ENCODE measurements at regions of chr5 and their contacts with region 1.

Region 1: GRCh38 chr5:143536364-143536763 is 132.9 kb upstream of the NR3C1 start:
- DNase-seq: peak; percentile 89
- H3K4me3 Mint-ChIP-seq: no peak overlapping the region
- H3K27ac Mint-ChIP-seq: peak overlapping the region; percentile 96
- H3K4me1 Mint-ChIP-seq: peaks cover 11% of the 10 kb centered on the region
- H3K27me3 Mint-ChIP-seq: no peaks in the 10 kb centered on the region
- CTCF ChIP-seq: no peak

Region 2: DNA sequence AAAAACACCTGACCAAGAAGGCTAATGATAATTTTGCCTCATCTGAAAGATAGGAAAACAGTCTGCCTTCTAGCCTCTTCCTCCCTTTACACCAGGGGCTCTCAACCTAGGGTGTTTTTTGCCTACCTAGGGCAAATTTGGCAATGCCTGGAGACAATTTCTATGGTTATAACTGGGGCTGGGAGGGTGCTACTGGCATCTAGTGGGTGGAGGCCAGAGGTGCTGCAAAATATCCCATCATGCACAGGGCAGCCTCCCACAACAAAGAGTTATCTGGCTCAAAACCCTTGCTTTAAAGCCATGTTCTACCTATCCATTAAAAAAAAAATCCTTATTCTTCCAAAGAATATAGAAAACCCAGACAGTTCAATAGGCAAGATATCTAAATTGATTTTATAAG is 87.8 kb before region 1 on chr5:
- CTCF ChIA-PET with region 1: no interaction called
- POLR2A ChIA-PET with region 1: no interaction called
- intact Hi-C with region 1: no loop called
- DNase-seq: no peak
- H3K4me3 Mint-ChIP-seq: no peak overlapping the region
- H3K27ac Mint-ChIP-seq: no peak overlapping the region
- H3K4me1 Mint-ChIP-seq: no peaks in the 10 kb centered on the region
- H3K27me3 Mint-ChIP-seq: no peaks in the 10 kb centered on the region
- CTCF ChIP-seq: no peak

Region 3: GRCh38 chr5:143524338-143524945 is 11.9 kb before region 1 on chr5:
- CTCF ChIA-PET with region 1: interaction called, 7 read pairs
- POLR2A ChIA-PET with region 1: interaction called, 17 read pairs
- intact Hi-C with region 1: no loop called
- DNase-seq: no peak
- H3K4me3 Mint-ChIP-seq: no peak overlapping the region
- H3K27ac Mint-ChIP-seq: no peak overlapping the region
- H3K4me1 Mint-ChIP-seq: no peaks in the 10 kb centered on the region
- H3K27me3 Mint-ChIP-seq: no peaks in the 10 kb centered on the region
- CTCF ChIP-seq: no peak

Region 4: DNA sequence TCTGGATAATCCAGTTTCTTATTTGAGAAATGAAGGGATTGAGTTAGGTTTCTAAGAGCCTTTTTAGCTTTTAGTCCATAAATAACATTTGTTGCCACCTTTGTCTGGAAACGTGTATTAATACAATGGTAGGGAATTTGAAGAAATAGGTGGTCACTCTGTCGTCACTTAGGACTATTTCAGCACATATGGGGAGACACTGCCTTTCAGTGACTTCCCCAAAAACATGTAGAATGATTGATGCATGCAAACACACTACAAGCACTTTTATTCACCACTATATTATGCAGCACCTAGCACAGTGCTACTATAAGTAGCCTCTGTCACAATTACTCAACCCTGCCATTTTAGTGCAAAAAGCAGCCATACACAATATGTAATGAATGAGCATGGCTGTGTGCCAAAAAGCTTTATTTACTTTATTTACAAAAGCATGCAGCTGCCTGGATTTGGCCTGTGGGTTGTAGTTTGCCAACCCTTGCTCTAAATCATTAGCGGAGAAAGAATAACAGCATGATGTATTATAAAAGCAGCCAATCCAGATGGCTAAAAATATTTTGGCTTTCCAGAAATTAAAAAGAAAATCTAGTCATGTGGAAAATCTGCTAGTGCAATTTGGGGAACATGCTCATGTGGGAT is 121.4 kb after region 1 on chr5:
- CTCF ChIA-PET with region 1: no interaction called
- POLR2A ChIA-PET with region 1: no interaction called
- intact Hi-C with region 1: no loop called
- DNase-seq: peak; percentile 84
- H3K4me3 Mint-ChIP-seq: no peak overlapping the region
- H3K27ac Mint-ChIP-seq: no peak overlapping the region
- H3K4me1 Mint-ChIP-seq: peaks cover 22% of the 10 kb centered on the region
- H3K27me3 Mint-ChIP-seq: no peaks in the 10 kb centered on the region
- CTCF ChIP-seq: no peak

Measured in MCF 10A (cell line).